BJ (cell line): ENCODE measurements at regions of chr2 and their contacts with region 1.

Region 1: GRCh38 chr2:37877457-37878315 is 47.4 kb upstream of the RMDN2 start:
- DNase-seq: no peak
- H3K4me3 ChIP-seq: no peak overlapping the region
- H3K27me3 ChIP-seq: peaks cover 4% of the 10 kb centered on the region
- CTCF ChIP-seq: peak; percentile 57

Region 2: GRCh38 chr2:37389989-37390765 is 487.5 kb before region 1 on chr2:
- CTCF ChIA-PET with region 1: interaction called, 59 read pairs
- POLR2A ChIA-PET with region 1: no interaction called
- DNase-seq: no peak
- H3K4me3 ChIP-seq: no peak overlapping the region
- H3K27me3 ChIP-seq: no peaks in the 10 kb centered on the region; the same call in 1 of the 2 replicates
- CTCF ChIP-seq: no peak

Region 3: DNA sequence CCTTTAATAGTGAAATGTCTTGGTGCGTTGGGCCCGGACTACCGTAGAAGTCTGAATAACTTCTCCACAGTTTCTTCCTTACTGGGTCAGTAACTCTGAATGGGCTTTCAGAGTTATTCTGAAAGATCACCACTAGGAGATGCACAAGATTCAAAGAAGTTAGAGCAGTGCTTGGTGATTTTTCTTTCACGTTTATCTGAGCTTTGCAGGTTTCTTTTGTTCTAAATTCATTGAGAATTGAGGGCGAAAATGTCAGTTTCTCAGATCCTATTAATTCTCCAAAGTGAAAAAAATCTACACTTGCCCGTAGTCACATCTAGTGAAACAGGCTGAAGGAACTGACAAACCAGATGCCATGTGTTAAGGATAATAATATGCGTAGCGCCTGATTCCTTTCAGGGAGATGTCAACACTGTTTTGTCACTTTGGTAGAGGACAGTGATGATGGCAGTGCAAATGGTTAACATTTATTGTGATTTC is 463.2 kb before region 1 on chr2:
- CTCF ChIA-PET with region 1: interaction called, 130 read pairs
- POLR2A ChIA-PET with region 1: no interaction called
- DNase-seq: peak; percentile 31
- H3K4me3 ChIP-seq: no peak overlapping the region
- H3K27me3 ChIP-seq: no peaks in the 10 kb centered on the region
- CTCF ChIP-seq: peak; percentile 87

Region 4: GRCh38 chr2:37512971-37513370 is 364.7 kb before region 1 on chr2:
- CTCF ChIA-PET with region 1: no interaction called
- POLR2A ChIA-PET with region 1: no interaction called
- DNase-seq: no peak
- H3K4me3 ChIP-seq: no peak overlapping the region
- H3K27me3 ChIP-seq: no peaks in the 10 kb centered on the region
- CTCF ChIP-seq: no peak

Region 5: GRCh38 chr2:37809525-37809924 is 68.2 kb before region 1 on chr2:
- CTCF ChIA-PET with region 1: interaction called, 11 read pairs
- POLR2A ChIA-PET with region 1: no interaction called
- DNase-seq: no peak
- H3K4me3 ChIP-seq: no peak overlapping the region
- H3K27me3 ChIP-seq: no peaks in the 10 kb centered on the region
- CTCF ChIP-seq: peak; percentile 57

Region 6: DNA sequence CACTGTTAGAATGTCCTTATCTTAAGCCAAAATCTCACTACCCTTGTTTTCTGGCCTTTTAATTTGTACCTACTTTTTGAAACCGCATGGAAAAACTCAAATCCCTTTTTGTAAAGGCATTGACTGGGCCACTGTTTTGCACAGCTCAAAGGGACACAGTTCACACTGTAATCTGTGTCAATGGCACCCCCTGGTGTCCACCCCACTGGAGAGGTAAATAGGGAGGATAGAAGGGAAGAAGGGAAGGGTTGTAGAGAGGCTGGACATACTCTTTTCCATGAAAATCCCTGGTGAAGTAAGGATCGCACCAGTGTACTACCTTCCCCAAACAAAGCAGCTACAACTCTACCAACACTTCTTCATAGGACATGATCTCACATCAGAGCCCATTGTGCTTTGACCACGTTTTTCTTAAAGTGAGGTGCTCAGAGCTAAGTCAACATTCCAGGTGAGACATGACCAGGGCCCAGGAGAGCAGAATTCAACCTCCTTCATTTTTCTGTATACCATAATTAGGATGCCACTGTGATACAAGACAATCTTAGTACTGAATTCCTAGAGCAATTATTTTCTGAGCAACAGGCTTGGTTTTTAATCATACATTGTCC is 45.0 kb before region 1 on chr2:
- CTCF ChIA-PET with region 1: interaction called, 32 read pairs
- POLR2A ChIA-PET with region 1: interaction called, 3 read pairs
- DNase-seq: no peak
- H3K4me3 ChIP-seq: no peak overlapping the region
- H3K27me3 ChIP-seq: no peaks in the 10 kb centered on the region
- CTCF ChIP-seq: peak; percentile 74

Region 7: DNA sequence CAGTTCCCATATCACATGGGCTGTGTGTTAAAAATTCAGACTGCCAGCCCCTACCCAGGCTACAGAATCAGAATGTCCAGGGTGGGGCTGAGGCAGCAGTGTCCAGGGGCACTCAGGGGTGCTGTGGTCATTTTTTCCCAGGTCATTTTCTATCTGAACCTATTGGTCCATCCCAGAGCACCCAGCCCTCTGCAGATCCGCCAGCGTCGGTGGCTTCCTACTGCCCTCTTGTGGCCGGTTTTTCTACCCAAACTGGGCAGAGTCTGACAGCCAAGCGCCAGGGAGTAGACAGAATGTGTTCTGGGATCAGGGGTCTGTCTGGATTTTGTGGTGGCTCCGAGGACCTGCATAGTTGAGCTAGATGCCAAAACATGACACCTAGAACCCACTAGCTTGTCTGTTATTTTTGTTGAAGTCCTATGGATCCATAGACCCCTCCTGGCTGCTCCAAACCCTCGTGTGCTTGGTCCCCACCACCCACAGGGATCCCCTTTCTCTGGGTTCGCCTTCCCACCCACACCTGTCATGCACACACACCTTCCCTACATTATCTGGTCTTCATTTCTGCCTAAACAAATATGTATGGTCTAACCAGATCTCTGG is 13.3 kb after region 1 on chr2:
- CTCF ChIA-PET with region 1: interaction called, 33 read pairs
- POLR2A ChIA-PET with region 1: no interaction called
- DNase-seq: no peak
- H3K4me3 ChIP-seq: no peak overlapping the region
- H3K27me3 ChIP-seq: no peaks in the 10 kb centered on the region
- CTCF ChIP-seq: peak; percentile 84